Mammary epithelial cell (primary cell): ENCODE measurements at regions of chr6 and their contacts with region 1.

Region 1: GRCh38 chr6:71012866-71013469 is 56.1 kb upstream of the B3GAT2 start:
- DNase-seq: peak; percentile 50
- H3K4me3 ChIP-seq: no peak overlapping the region
- H3K27ac ChIP-seq: no peak overlapping the region
- H3K4me1 ChIP-seq: no peaks in the 10 kb centered on the region
- H3K27me3 ChIP-seq: peaks cover 4% of the 10 kb centered on the region
- CTCF ChIP-seq: peak; percentile 86

Region 2: GRCh38 chr6:70221025-70221714 is 791.8 kb before region 1 on chr6:
- CTCF ChIA-PET with region 1: no interaction called
- dilution Hi-C with region 1: no loop called
- in situ Hi-C with region 1: no loop called
- intact Hi-C with region 1: loop called (anchors 2 kb)
- DNase-seq: no peak
- H3K4me3 ChIP-seq: no peak overlapping the region
- H3K27ac ChIP-seq: no peak overlapping the region
- H3K4me1 ChIP-seq: no peaks in the 10 kb centered on the region
- H3K27me3 ChIP-seq: peaks cover 17% of the 10 kb centered on the region
- CTCF ChIP-seq: peak; percentile 57 to 64

Region 3: GRCh38 chr6:70706491-70707123 is 306.4 kb before region 1 on chr6:
- CTCF ChIA-PET with region 1: no interaction called
- dilution Hi-C with region 1: no loop called
- in situ Hi-C with region 1: no loop called
- intact Hi-C with region 1: loop called (anchors 2 kb)
- DNase-seq: peak; percentile 10
- H3K4me3 ChIP-seq: no peak overlapping the region
- H3K27ac ChIP-seq: no peak overlapping the region
- H3K4me1 ChIP-seq: no peaks in the 10 kb centered on the region
- H3K27me3 ChIP-seq: no peaks in the 10 kb centered on the region
- CTCF ChIP-seq: peak; percentile 46 to 53

Region 4: GRCh38 chr6:70884074-70884983 is 128.6 kb before region 1 on chr6:
- CTCF ChIA-PET with region 1: no interaction called
- dilution Hi-C with region 1: no loop called
- in situ Hi-C with region 1: no loop called
- intact Hi-C with region 1: loop called (anchors 2 kb)
- DNase-seq: peak; percentile 20
- H3K4me3 ChIP-seq: no peak overlapping the region
- H3K27ac ChIP-seq: no peak overlapping the region
- H3K4me1 ChIP-seq: no peaks in the 10 kb centered on the region
- H3K27me3 ChIP-seq: peaks cover 19% of the 10 kb centered on the region
- CTCF ChIP-seq: peak; percentile 75 to 87

Region 5: DNA sequence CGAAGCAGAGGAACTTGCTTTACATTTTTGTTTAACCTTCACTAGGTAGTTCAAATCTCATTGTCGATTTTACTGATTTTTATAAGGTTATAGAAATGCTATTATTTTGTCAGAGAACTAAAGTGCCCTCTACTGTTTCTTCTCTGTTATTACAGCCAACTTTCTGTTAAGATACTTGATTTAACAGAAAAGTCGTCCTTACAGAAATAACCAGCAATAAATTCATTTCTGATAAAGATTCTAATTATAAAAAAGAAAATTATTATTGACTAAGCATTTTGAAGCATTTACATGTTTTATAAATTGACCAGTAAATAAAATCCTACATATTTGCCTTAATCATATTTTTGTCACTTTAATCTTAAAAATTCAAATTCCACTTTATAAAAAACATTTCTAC is 336.4 kb after region 1 on chr6:
- CTCF ChIA-PET with region 1: no interaction called
- dilution Hi-C with region 1: no loop called
- in situ Hi-C with region 1: no loop called
- intact Hi-C with region 1: loop called (anchors 5 kb)
- DNase-seq: no peak
- H3K4me3 ChIP-seq: no peak overlapping the region
- H3K27ac ChIP-seq: no peak overlapping the region
- H3K4me1 ChIP-seq: peaks cover 8% of the 10 kb centered on the region
- H3K27me3 ChIP-seq: no peaks in the 10 kb centered on the region
- CTCF ChIP-seq: peak; percentile 49 to 68

Region 6: DNA sequence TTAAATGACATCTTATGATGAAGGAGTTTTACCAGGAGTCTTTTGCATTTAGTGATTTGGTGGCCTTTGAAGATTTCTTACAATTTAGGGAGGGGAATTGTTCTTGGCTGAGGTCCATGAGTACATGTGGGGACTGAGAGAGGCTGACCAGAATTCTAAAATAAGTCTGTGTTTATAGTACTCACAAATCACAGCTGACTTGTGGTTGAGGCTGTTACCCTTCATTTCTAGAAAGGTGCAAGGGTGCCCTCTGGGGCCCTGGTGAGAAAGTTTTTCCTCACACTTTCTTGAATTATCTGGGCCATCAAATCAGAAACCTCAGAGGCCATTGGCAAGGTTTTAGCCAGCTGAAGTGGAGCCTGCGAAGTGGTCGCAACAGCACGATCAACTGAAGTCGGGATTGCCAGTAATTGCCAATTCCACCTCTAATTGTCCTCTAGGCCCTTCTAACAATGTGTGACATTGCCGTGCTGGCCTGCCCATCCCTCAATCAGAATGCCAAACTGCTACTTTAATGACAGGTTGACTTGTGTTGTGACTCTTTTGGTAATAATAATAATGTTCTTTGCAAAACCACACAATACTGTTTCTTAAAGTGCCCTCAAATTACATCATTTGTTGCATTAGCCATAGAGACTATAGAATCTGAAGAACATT is 497.2 kb after region 1 on chr6:
- CTCF ChIA-PET with region 1: no interaction called
- dilution Hi-C with region 1: no loop called
- in situ Hi-C with region 1: no loop called
- intact Hi-C with region 1: loop called (anchors 1 kb)
- DNase-seq: peak; percentile 58
- H3K4me3 ChIP-seq: no peak overlapping the region
- H3K27ac ChIP-seq: no peak overlapping the region
- H3K4me1 ChIP-seq: peaks cover 2% of the 10 kb centered on the region
- H3K27me3 ChIP-seq: no peaks in the 10 kb centered on the region
- CTCF ChIP-seq: peak; percentile 61 to 72